ENCODE measurements at regions of chr2 and their contacts with region 1.

Region 1: DNA sequence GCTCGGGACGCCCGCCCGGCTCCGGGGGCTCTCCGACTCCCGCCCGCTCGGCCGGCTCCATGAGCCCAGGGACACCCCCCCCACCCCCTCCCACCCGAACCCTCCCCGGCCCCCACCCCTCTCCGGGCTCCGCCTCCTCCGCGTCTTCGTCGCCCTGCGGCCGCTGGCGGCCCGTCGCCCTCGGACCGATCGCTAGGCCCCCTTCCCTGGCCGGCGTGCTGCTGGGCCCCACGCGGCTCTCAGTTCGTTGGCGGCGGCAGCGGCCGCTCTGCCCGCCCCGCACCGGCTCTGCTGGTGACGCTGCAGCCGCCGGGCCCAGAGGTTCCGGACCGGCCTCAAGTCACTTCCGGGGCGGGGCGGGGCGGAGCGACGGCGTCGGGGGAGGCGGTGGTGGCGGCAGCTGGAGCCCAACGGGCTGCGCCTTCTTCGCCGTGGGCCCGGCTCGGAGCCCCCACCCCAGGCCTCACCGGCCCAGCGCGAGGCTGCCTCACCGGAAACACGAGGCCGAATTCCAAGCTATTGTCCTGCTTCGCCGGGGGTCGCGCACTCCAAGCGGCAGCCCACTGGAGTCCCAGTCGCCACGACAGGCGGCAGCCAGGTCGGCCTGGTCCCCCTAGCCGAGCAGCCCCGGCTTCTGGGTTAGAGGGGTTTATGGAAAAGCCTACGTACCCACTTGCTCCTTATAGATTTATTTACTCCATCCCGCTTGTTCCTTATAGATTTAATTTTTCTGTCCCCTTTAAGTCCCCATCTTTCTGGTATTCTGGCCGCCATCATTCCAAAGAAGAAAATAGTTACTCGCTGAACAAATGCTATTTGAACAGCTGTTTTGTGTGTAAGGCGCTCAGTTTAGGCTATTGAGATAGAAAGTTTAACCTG is at the start of gene PSME4:
- DNase-seq: peak; percentile 80 to 95 (median 90)
- ATAC-seq: peak; percentile 97
- H3K4me3 ChIP-seq: peak within 1 kb of the TSS; percentile 84
- H3K4me3 Mint-ChIP-seq: peak within 1 kb of the TSS; percentile 89 to 100 (median 96)
- H3K27ac ChIP-seq: peak within 1 kb of the TSS; percentile 93
- H3K27ac Mint-ChIP-seq: peak within 1 kb of the TSS; percentile 91 to 99 (median 95)
- H3K4me1 ChIP-seq: peaks cover 17 to 21% of the 10 kb centered on the region in 2 donors
- H3K4me1 Mint-ChIP-seq: peaks cover 37 to 65% (median 54%) of the 10 kb centered on the region in 7 donors
- H3K27me3 ChIP-seq: no peaks in the 10 kb centered on the region
- H3K27me3 Mint-ChIP-seq: no peaks in the 10 kb centered on the region
- total RNA-seq, gene PSME4: 48.8 to 80.1 (median 54.4) TPM

Region 2: GRCh38 chr2:53786705-53787612 is 184.0 kb before region 1 on chr2 and contains the starts of genes ASB3 and ERLEC1:
- CTCF ChIA-PET with region 1: no interaction called
- POLR2A ChIA-PET with region 1: no interaction called
- intact Hi-C with region 1: loop called (anchors 1 to 2 kb)
- DNase-seq: peak; percentile 69 to 87 (median 83)
- ATAC-seq: peak; percentile 95
- H3K4me3 ChIP-seq: peak within 1 kb of the TSS; percentile 66
- H3K4me3 Mint-ChIP-seq: peak within 1 kb of the TSS; percentile 88 to 99 (median 98)
- H3K27ac ChIP-seq: peak within 1 kb of the TSS; percentile 82
- H3K27ac Mint-ChIP-seq: peak within 1 kb of the TSS; percentile 81 to 99 (median 96)
- H3K4me1 ChIP-seq: peaks cover 14 to 16% of the 10 kb centered on the region in 2 donors
- H3K4me1 Mint-ChIP-seq: peaks cover 37 to 79% (median 67%) of the 10 kb centered on the region in 7 donors
- H3K27me3 ChIP-seq: no peaks in the 10 kb centered on the region
- H3K27me3 Mint-ChIP-seq: no peaks in the 10 kb centered on the region
- total RNA-seq, gene ASB3: 24.9 to 43.2 (median 34.5) TPM
- total RNA-seq, gene ERLEC1: 13.3 to 30.1 (median 26.3) TPM

Region 3: GRCh38 chr2:53913721-53914120 is 57.2 kb before region 1 on chr2:
- CTCF ChIA-PET with region 1: no interaction called
- POLR2A ChIA-PET with region 1: no interaction called
- intact Hi-C with region 1: no loop called
- DNase-seq: peak in 5 of 9 donors; percentile 16 to 34 (median 21)
- ATAC-seq: peak; percentile 76
- H3K4me3 ChIP-seq: no peak overlapping the region
- H3K4me3 Mint-ChIP-seq: no peak overlapping the region
- H3K27ac ChIP-seq: no peak overlapping the region
- H3K27ac Mint-ChIP-seq: peak overlapping the region in 7 of 9 donors; percentile 25 to 59 (median 51)
- H3K4me1 ChIP-seq: no peaks in the 10 kb centered on the region
- H3K4me1 Mint-ChIP-seq: peaks cover 8 to 14% (median 9%) of the 10 kb centered on the region in 7 donors
- H3K27me3 ChIP-seq: no peaks in the 10 kb centered on the region
- H3K27me3 Mint-ChIP-seq: no peaks in the 10 kb centered on the region

Region 4: DNA sequence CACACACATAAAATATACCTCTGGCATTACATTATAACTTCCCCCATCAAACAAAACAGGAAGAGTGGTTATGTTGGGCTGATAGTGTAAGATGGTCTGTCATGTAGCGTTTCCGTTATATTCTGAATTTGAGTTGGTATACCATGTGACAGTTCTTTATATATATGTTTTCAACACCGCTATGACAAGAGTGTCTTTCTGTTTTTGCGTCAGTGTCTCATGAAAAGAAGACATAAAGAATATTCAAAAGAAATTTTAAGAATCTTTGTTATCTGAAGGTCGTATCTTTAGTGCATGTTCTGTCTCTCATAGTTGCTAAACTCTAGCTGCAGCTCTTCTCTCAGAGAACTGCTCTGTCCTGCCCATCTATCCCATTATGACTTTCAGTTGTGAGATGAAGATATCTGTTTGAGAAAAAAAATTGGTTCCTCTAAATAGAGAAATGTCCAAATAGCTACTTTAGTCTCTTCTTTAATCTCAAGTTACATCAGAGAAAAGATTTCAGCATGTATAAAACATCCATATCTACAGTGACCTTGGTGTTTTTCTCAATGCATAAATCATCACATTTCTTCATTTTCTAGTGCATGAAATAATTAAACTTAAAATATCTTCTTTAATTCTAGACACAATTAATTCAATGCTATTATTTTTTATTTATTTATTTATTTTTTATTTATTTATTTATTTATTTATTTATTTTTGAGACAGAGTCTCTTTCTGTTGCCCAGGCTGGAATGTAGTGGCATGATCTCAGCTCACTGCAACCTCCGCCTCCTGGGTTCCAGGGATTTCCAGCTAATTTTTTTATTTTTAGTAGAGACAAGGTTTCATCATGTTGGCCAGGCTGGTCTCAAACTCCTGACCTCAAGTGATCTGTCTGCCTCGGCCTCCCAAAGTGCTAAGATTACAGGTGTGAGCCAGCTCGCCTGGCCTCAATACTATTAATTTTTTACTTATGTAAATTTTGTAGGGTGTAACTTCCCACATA is 24.1 kb after region 1 on chr2:
- CTCF ChIA-PET with region 1: no interaction called
- POLR2A ChIA-PET with region 1: interaction called, 71 read pairs
- intact Hi-C with region 1: loop called (anchors 1 kb)
- DNase-seq: peak in 7 of 9 donors; percentile 71 to 89 (median 86)
- ATAC-seq: peak; percentile 97
- H3K4me3 ChIP-seq: peak overlapping the region; percentile 24
- H3K4me3 Mint-ChIP-seq: peak overlapping the region; percentile 64 to 79 (median 73)
- H3K27ac ChIP-seq: peak overlapping the region; percentile 73
- H3K27ac Mint-ChIP-seq: peak overlapping the region; percentile 83 to 98 (median 91)
- H3K4me1 ChIP-seq: peaks cover 32 to 34% of the 10 kb centered on the region in 2 donors
- H3K4me1 Mint-ChIP-seq: peaks cover 20 to 35% (median 29%) of the 10 kb centered on the region in 7 donors
- H3K27me3 ChIP-seq: no peaks in the 10 kb centered on the region
- H3K27me3 Mint-ChIP-seq: no peaks in the 10 kb centered on the region

Region 5: DNA sequence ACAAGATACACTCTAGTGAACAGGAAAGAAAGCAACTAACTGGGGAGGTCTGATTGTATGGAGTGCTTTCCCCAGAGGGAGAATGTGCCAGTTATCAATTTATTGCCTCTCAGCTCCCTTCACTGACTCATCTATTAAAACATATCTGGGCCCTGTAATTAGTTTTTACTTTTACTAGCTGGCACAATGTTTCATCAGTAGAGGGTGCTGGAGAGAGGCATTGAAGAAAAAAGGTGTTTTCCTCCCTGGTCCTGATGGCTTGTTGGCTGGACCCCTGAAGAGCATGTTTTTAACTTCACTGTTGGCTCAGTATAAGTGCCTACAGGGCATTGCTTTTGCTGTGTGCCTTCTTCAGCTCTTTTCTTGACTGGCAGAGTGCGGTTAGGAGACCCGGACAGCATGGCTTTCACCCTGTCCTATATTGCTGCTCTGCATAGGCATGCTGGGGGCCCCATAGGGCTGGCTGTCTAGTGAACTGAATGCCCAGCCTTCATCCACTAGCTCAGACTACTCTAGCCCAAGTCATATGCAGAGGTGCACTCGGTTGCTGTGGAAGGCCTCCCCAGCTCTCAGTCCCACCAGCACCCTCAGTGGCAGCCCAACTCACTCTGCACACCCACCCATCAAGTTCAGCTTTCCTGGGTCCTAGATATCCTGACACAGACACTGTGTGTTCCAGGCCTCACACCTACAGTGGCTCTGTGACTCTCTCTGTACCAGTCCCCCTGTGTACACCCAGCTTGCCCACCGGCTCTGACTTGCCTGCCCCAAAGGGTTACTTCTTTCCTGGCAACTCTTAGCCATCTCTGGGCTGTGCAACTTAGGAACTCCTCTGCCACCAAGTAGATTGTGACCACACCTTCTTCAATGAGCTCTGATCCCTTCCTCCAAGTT is 82.1 kb after region 1 on chr2:
- CTCF ChIA-PET with region 1: interaction called, 4 read pairs
- POLR2A ChIA-PET with region 1: interaction called, 3 read pairs
- intact Hi-C with region 1: loop called (anchors 5 kb)
- DNase-seq: no peak
- ATAC-seq: peak; percentile 22
- H3K4me3 ChIP-seq: no peak overlapping the region
- H3K4me3 Mint-ChIP-seq: peak overlapping the region in 6 of 10 donors; percentile 36 to 77 (median 70)
- H3K27ac ChIP-seq: peak overlapping the region; percentile 56
- H3K27ac Mint-ChIP-seq: peak overlapping the region; percentile 70 to 94 (median 86)
- H3K4me1 ChIP-seq: peaks cover 6 to 20% of the 10 kb centered on the region in 2 donors
- H3K4me1 Mint-ChIP-seq: peaks cover 18 to 46% (median 31%) of the 10 kb centered on the region in 7 donors
- H3K27me3 ChIP-seq: no peaks in the 10 kb centered on the region
- H3K27me3 Mint-ChIP-seq: no peaks in the 10 kb centered on the region